B cell (primary cell): ENCODE measurements at regions of chr6 and their contacts with region 1.

Region 1: GRCh38 chr6:33620856-33621710 is at the start of gene ITPR3:
- DNase-seq: peak; percentile 93
- ATAC-seq: peak; percentile 88
- H3K4me3 ChIP-seq: peak within 1 kb of the TSS; percentile 70 to 98 (median 95)
- H3K4me3 Mint-ChIP-seq: peak within 1 kb of the TSS; percentile 95
- H3K27ac ChIP-seq: peak within 1 kb of the TSS; percentile 80 to 92
- H3K27ac Mint-ChIP-seq: peak within 1 kb of the TSS; percentile 87
- H3K4me1 ChIP-seq: peaks cover 20 to 30% of the 10 kb centered on the region in 2 donors
- H3K4me1 Mint-ChIP-seq: peaks cover 49% of the 10 kb centered on the region
- H3K27me3 ChIP-seq: no peaks in the 10 kb centered on the region
- H3K27me3 Mint-ChIP-seq: no peaks in the 10 kb centered on the region
- CTCF ChIP-seq: no peak
- total RNA-seq, gene ITPR3: 61.9 and 62.4 TPM in 2 replicates

Region 2: GRCh38 chr6:33425668-33426577 is 195.2 kb before region 1 on chr6:
- CTCF ChIA-PET with region 1: no interaction called
- POLR2A ChIA-PET with region 1: no interaction called
- intact Hi-C with region 1: loop called (anchors 5 kb)
- DNase-seq: peak; percentile 83
- ATAC-seq: peak; percentile 59
- H3K4me3 ChIP-seq: peak overlapping the region; percentile 48 to 79 (median 62)
- H3K4me3 Mint-ChIP-seq: peak overlapping the region; percentile 92
- H3K27ac ChIP-seq: peak overlapping the region; percentile 78 to 86
- H3K27ac Mint-ChIP-seq: peak overlapping the region; percentile 91
- H3K4me1 ChIP-seq: peaks cover 50 to 56% of the 10 kb centered on the region in 2 donors
- H3K4me1 Mint-ChIP-seq: peaks cover 65% of the 10 kb centered on the region
- H3K27me3 ChIP-seq: no peaks in the 10 kb centered on the region
- H3K27me3 Mint-ChIP-seq: peaks cover 4% of the 10 kb centered on the region
- CTCF ChIP-seq: peak; percentile 25

Region 3: DNA sequence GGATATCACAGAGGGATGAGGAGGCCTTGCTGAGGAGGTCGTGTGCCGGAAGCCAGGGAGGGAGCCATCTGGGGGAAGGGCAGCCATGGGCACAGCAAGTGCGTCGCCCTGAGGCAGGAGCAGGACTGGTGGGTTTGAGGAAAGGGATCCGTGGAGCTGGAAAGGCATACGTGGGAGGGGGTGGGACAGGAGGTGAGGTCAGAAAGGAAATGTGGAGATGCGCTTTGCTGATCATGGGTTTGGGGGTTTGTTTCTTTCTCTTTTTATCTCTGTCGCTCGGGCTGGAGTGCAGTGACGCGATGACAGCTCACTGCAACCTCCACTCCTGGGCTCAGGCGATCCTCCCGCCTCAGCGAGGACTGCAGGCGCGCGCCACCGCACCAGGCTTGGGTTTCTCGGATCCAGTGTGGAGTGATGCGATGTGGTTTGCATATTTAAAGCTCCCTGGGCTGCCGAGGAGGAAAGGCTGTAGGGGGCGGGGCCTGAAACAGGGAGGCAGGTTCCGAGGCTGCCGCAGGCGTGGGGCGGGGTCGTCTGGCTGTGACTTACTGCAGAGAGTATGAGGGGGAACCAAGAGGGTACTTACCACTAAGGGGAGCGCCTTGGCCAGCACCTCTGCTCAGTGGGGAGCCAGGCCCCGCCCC is 28.6 kb before region 1 on chr6:
- CTCF ChIA-PET with region 1: interaction called, 13 read pairs
- POLR2A ChIA-PET with region 1: interaction called, 15 read pairs
- intact Hi-C with region 1: loop called (anchors 1 kb)
- DNase-seq: peak; percentile 91
- ATAC-seq: peak; percentile 50
- H3K4me3 ChIP-seq: peak overlapping the region in 4 of 5 experiments; percentile 38 to 67 (median 42)
- H3K4me3 Mint-ChIP-seq: peak overlapping the region; percentile 81
- H3K27ac ChIP-seq: peak overlapping the region; percentile 94 to 100
- H3K27ac Mint-ChIP-seq: peak overlapping the region; percentile 100
- H3K4me1 ChIP-seq: peaks cover 50 to 61% of the 10 kb centered on the region in 2 donors
- H3K4me1 Mint-ChIP-seq: peaks cover 68% of the 10 kb centered on the region
- H3K27me3 ChIP-seq: no peaks in the 10 kb centered on the region
- H3K27me3 Mint-ChIP-seq: no peaks in the 10 kb centered on the region
- CTCF ChIP-seq: no peak

Region 4: DNA sequence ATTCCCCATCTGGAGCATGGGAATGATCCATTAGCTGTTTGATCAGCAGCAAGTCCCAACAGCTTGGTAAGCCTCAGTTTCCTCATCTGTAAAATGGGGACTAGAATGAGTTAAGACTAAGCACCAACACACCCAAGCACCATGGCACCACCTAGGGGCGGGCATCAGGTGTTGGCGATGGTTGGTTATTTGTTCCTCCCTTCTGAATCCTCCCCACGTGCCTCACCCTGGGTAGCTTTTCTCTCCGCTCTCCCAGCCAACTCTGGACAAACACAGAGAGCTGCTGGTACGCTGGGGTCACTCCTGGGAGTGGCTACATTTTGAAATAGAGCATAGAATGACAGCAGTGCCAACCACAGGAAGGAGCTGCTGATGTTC is 13.3 kb before region 1 on chr6:
- CTCF ChIA-PET with region 1: interaction called, 31 read pairs
- POLR2A ChIA-PET with region 1: interaction called, 4 read pairs
- intact Hi-C with region 1: no loop called
- DNase-seq: peak; percentile 70
- ATAC-seq: peak; percentile 87
- H3K4me3 ChIP-seq: no peak overlapping the region
- H3K4me3 Mint-ChIP-seq: no peak overlapping the region
- H3K27ac ChIP-seq: no peak overlapping the region
- H3K27ac Mint-ChIP-seq: no peak overlapping the region
- H3K4me1 ChIP-seq: peaks cover 7 to 23% of the 10 kb centered on the region in 2 donors
- H3K4me1 Mint-ChIP-seq: peaks cover 30% of the 10 kb centered on the region
- H3K27me3 ChIP-seq: no peaks in the 10 kb centered on the region
- H3K27me3 Mint-ChIP-seq: no peaks in the 10 kb centered on the region
- CTCF ChIP-seq: peak; percentile 74

Region 5: DNA sequence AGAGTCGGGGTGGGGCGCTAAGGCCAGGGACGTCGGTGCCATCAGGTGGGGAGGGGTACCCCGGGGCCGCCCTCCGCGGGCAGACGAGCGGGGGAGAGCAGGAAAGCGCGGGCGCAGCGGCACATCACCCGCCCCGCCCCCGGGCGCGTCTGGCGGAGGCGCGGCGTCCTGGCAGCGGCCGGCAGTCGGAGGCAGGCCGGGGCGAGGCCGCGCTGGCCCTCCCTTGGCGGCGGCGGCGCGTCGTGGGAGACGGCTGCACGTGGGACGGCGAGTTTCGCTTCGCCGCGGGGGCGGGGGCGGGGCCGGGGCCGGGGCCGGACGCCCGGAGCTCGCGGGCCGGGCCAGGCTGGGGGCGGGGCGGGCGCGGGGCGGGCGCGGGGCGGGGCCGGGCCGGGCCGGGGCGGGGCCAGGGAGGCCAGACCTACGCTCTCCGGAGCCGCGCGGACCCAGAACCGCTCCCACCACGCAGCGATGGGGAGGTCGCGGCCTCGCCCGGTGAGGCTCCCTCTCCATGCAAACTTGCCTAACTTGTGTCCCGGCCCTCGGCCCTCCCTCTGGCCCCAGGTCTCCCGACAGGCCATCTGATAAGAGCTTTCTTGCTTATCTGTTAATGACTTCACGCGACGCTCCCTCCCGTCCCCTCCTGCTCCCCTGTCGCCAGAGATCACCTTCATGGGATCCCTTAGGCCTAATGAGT is 12.5 kb after region 1 on chr6:
- CTCF ChIA-PET with region 1: interaction called, 12 read pairs
- POLR2A ChIA-PET with region 1: interaction called, 4 read pairs
- intact Hi-C with region 1: loop called (anchors 1 kb)
- DNase-seq: peak; percentile 79
- ATAC-seq: peak; percentile 92
- H3K4me3 ChIP-seq: peak overlapping the region in 4 of 5 experiments; percentile 25 to 58 (median 53)
- H3K4me3 Mint-ChIP-seq: peak overlapping the region; percentile 94
- H3K27ac ChIP-seq: peak overlapping the region in 1 of 2 donors; percentile 33
- H3K27ac Mint-ChIP-seq: peak overlapping the region; percentile 85
- H3K4me1 ChIP-seq: peaks cover 17 to 29% of the 10 kb centered on the region in 2 donors
- H3K4me1 Mint-ChIP-seq: peaks cover 50% of the 10 kb centered on the region
- H3K27me3 ChIP-seq: no peaks in the 10 kb centered on the region
- H3K27me3 Mint-ChIP-seq: no peaks in the 10 kb centered on the region
- CTCF ChIP-seq: no peak

Region 6: DNA sequence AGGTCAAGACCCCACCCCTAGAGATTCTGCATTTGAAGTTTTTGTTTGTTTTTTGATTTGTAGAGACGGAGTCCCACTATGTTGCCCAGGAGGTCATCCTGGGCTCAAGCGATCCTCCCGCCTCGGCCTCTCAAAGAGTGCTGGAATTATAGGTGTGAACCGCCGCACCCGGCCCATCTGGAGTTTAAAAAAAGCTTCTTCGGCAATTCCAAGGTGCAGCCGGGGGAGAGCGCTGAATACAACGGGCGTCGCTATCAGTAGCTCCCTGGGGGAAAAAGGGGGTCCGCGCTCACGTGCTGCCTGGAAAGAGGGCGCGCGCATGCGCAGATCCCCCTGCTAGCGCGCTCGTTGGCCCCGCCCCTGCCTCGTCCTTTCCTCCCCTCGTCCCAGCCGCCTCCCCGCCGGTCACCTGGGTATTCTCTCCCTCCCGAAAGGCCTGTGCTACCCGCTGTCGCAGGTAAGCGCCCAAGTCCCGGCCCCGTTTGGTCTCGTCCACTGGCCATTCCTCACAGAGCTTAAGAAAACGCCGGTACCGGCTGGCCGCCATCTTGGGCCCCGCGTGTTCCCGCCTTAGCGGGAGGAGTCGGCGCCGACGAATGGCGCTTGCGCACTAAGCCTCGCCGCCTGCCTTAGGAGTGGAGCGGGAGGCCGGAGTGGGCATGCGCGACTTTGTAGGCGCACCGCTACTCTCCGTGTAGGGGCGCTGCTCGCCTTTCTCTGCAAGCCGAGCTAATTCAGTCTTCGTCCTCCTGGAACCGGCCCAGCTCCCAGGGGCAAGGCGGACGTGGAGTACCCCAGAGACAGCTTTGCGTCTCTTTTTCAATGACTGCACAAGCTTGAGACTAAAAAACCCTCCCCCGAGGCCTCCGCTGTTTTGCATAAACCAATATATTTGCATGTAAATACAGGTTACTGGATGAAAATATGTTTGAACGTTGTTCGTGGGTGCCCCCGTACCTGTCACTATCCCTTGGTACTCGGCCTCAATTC is 90.4 kb after region 1 on chr6 and contains the start of gene UQCC2:
- CTCF ChIA-PET with region 1: interaction called, 9 read pairs
- POLR2A ChIA-PET with region 1: no interaction called
- intact Hi-C with region 1: loop called (anchors 1 kb)
- DNase-seq: peak; percentile 99
- ATAC-seq: peak; percentile 87
- H3K4me3 ChIP-seq: peak within 1 kb of the TSS; percentile 62 to 96 (median 93)
- H3K4me3 Mint-ChIP-seq: peak within 1 kb of the TSS; percentile 87
- H3K27ac ChIP-seq: peak within 1 kb of the TSS; percentile 83 to 88
- H3K27ac Mint-ChIP-seq: peak within 1 kb of the TSS; percentile 93
- H3K4me1 ChIP-seq: peaks cover 16 to 28% of the 10 kb centered on the region in 2 donors
- H3K4me1 Mint-ChIP-seq: peaks cover 33% of the 10 kb centered on the region
- H3K27me3 ChIP-seq: no peaks in the 10 kb centered on the region
- H3K27me3 Mint-ChIP-seq: no peaks in the 10 kb centered on the region
- CTCF ChIP-seq: peak; percentile 44
- total RNA-seq, gene UQCC2: 16.6 and 17.1 TPM in 2 replicates